Ascending aorta (tissue), 2 donors: ENCODE measurements at regions of chr5 and their contacts with region 1.

Region 1: DNA sequence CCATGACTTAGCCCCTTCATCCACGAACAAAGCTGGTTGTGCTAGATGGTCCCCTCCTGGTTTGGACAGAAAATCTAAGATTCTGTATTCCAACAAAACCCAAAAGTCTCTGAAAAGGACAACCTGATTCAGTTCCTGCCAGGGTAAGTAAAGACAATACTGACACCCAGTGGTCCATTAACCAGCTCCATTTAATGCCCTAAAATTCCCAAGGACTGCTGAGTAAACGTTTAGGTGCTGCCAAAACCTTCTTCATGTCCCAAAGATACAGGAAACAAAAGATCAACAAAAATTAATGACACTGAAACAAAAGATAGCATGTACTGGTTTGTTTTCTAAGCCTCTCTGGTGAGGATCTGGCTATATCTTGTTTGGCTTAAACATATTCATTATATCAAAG is 25.3 kb upstream of the PPP1R2B start:
- DNase-seq: no peak
- H3K4me3 ChIP-seq: no peak overlapping the region
- H3K27ac ChIP-seq: no peak overlapping the region
- H3K4me1 ChIP-seq: no peaks in the 10 kb centered on the region
- H3K27me3 ChIP-seq: no peaks in the 10 kb centered on the region
- CTCF ChIP-seq: peak; percentile 25 to 51 (median 36)

Region 2: DNA sequence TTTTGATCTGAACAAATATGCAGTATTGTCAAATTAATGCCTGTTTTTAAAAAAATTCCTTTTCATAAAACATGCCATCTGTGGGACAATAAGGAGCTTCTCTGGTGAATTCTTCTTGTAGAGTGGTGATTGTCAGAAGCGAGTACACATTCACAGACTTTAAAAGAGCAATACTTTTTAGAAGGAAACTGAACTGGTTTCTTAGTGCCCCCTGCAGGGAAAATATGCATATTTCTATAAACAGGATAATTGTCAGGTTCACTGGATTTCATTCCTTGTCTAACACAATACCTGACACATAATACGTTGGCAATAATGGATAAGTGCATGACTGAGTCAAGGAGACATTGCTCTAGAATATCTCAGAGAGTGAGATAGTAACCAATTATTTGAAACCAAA is 1677.6 kb before region 1 on chr5:
- intact Hi-C with region 1: loop called (anchors 10 kb)
- DNase-seq: no peak
- H3K4me3 ChIP-seq: no peak overlapping the region
- H3K27ac ChIP-seq: no peak overlapping the region
- H3K4me1 ChIP-seq: no peaks in the 10 kb centered on the region
- H3K27me3 ChIP-seq: no peaks in the 10 kb centered on the region
- CTCF ChIP-seq: peak in 1 of 3 experiments; percentile 27

Region 3: GRCh38 chr5:155943516-155944407 is 881.0 kb before region 1 on chr5:
- intact Hi-C with region 1: loop called (anchors 2 kb)
- DNase-seq: no peak
- H3K4me3 ChIP-seq: no peak overlapping the region
- H3K27ac ChIP-seq: no peak overlapping the region
- H3K4me1 ChIP-seq: no peaks in the 10 kb centered on the region
- H3K27me3 ChIP-seq: no peaks in the 10 kb centered on the region
- CTCF ChIP-seq: peak; percentile 48 to 86 (median 65)

Region 4: DNA sequence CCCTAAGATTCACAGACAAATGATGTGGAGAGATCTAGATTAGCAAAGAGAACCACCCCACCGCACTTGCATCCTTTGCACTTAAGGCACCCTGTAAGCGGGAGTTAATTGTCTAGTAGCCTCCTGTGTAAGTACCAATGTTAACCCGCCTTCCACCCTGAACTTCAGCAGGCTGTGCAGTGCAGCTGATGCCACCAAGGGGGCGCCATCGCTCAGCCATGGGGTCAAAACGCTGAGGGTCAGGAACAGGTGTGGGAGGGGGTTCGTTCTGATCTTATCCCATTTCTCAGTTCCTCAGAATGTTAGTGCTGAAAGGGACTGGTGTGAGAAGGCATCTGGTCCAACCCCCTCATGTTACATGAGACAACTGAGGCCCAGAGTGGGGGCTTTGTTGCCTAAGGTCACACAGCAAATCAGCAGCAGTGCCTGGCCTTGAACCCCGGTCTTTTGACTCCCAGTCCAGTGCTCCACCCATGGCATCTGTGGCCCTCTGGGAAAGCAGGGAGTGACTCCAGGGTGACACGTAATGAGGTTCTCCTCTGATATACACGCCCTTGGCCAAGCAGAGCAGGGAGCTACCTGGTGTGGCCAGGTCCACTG is 498.4 kb after region 1 on chr5:
- intact Hi-C with region 1: no loop called
- DNase-seq: peak in 1 of 2 donors; percentile 50
- H3K4me3 ChIP-seq: no peak overlapping the region
- H3K27ac ChIP-seq: no peak overlapping the region
- H3K4me1 ChIP-seq: no peaks in the 10 kb centered on the region
- H3K27me3 ChIP-seq: no peaks in the 10 kb centered on the region
- CTCF ChIP-seq: peak in 1 of 3 experiments; percentile 10